ENCODE measurements at regions of chr14 and their contacts with region 1.

Region 1: GRCh38 chr14:52325126-52325525 is 11.0 kb downstream of the PTGER2 start:
- DNase-seq: peak; percentile 52
- H3K4me3 Mint-ChIP-seq: peak overlapping the region; percentile 77
- H3K27ac Mint-ChIP-seq: peak overlapping the region; percentile 62
- H3K4me1 Mint-ChIP-seq: peaks cover 90% of the 10 kb centered on the region
- H3K27me3 Mint-ChIP-seq: no peaks in the 10 kb centered on the region

Region 2: GRCh38 chr14:51873221-51873893 is 451.8 kb before region 1 on chr14:
- intact Hi-C with region 1: loop called (anchors 5 kb)
- DNase-seq: peak; percentile 24
- H3K4me3 Mint-ChIP-seq: peak overlapping the region; percentile 59
- H3K27ac Mint-ChIP-seq: peak overlapping the region; percentile 80
- H3K4me1 Mint-ChIP-seq: peaks cover 63% of the 10 kb centered on the region
- H3K27me3 Mint-ChIP-seq: no peaks in the 10 kb centered on the region

Region 3: GRCh38 chr14:52351233-52352060 is 26.3 kb after region 1 on chr14:
- intact Hi-C with region 1: loop called (anchors 1 kb)
- DNase-seq: peak; percentile 8
- H3K4me3 Mint-ChIP-seq: peak overlapping the region; percentile 75
- H3K27ac Mint-ChIP-seq: peak overlapping the region; percentile 96
- H3K4me1 Mint-ChIP-seq: peaks cover 73% of the 10 kb centered on the region
- H3K27me3 Mint-ChIP-seq: no peaks in the 10 kb centered on the region

Region 4: DNA sequence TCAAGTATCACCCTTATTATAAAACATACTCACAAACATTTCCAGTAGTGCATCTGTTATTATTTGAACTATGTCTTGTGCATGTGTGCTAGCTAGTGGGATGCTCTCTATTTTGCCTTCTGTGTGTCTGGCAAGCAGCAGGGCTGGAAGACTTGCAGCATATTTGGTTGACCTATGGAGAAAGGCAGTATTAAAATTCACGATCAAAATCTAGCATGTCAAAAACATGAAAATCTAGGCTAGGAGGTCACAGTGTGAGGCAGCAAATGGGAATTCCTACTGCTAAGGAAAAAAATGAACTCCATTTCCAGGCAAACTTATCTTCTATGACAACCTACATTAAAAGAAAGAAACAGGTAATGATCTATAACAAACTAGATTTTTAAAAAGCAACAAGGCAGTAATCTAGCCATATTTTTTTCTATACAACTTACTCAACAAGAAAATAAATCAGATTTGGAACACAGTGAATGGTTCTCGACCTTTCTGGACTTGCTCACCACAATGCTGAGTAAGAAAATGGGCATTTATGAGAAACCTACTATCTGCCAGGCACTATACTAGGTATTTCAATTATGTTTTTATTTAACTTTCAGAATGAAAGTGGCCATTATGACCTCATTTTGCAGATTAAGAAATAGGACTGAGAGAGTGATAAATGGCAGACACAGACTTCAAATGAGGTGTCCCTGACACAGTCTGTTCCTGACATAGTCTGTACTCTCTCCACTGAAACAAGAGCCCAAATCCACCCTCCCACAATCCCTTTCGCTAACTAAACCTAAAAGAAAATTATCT is 130.4 kb after region 1 on chr14:
- intact Hi-C with region 1: loop called (anchors 1 kb)
- DNase-seq: no peak
- H3K4me3 Mint-ChIP-seq: no peak overlapping the region
- H3K27ac Mint-ChIP-seq: no peak overlapping the region
- H3K4me1 Mint-ChIP-seq: peaks cover 29% of the 10 kb centered on the region
- H3K27me3 Mint-ChIP-seq: no peaks in the 10 kb centered on the region

Measured in activated T-helper 1 cell treated with anti-CD3 and anti-CD28 coated beads, Interleukin-12 subunit alpha, Interleukin-12 subunit beta, Interleukin-2, Interleukin-4 antibody, amounts not matched to agents 30 ng/mL and 10 ng/mL and 1 ng/mL, durations not matched to agents 14 hours and 24 hours and 36 hours (primary cell).